HEK293 (cell line): ENCODE measurements at regions of chr10 and their contacts with region 1.

Region 1: GRCh38 chr10:102225646-102226541 is at the start of gene ELOVL3:
- H3K4me3 ChIP-seq: no peak within 1 kb of the TSS
- H3K27ac ChIP-seq: no peak within 1 kb of the TSS
- H3K4me1 ChIP-seq: peaks cover 7% of the 10 kb centered on the region
- CTCF ChIP-seq: no peak

Region 2: DNA sequence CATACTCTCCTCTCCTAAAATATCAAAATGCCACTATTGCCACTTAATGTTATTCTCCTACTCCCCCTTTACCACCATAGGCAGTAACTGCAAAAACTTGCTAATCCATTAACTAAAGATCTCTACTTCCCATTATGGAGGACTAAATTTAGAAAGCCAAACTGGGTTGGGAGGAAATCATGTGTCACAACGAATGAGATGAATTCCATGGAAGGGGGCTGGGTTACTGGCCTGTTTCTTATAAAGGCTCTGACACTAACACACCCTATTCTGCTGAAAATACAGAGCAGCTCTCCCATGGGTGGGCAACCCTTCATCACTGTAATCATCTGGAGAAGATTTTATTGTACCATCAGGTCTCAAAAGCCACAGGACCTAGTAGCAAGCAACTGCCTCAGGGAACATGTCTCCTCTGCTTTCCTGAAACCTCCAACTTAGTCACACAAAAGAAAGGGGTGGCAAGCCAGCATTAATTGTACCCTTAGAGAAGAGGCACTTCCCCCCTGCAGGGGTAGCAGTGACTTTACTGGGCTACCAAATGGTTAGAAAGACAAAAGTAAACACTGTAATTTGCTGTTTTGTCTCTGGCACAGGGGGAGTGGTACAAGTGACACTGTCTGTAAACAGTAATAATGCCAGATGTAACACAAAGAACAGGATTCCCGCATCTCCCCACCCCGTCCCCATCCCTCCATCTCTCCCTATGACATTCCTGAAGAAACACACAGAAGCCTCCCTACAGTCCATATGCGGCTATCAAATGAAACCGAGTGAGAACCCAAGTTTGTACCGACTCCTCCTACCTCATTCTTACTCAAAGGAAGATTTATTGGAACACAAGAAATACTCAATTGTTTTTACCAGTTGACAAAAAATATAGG is 251.6 kb before region 1 on chr10:
- CTCF ChIA-PET with region 1: no interaction called
- POLR2A ChIA-PET with region 1: no interaction called
- H3K4me3 ChIP-seq: no peak overlapping the region
- H3K27ac ChIP-seq: no peak overlapping the region
- H3K4me1 ChIP-seq: peaks cover 5% of the 10 kb centered on the region
- CTCF ChIP-seq: no peak

Region 3: DNA sequence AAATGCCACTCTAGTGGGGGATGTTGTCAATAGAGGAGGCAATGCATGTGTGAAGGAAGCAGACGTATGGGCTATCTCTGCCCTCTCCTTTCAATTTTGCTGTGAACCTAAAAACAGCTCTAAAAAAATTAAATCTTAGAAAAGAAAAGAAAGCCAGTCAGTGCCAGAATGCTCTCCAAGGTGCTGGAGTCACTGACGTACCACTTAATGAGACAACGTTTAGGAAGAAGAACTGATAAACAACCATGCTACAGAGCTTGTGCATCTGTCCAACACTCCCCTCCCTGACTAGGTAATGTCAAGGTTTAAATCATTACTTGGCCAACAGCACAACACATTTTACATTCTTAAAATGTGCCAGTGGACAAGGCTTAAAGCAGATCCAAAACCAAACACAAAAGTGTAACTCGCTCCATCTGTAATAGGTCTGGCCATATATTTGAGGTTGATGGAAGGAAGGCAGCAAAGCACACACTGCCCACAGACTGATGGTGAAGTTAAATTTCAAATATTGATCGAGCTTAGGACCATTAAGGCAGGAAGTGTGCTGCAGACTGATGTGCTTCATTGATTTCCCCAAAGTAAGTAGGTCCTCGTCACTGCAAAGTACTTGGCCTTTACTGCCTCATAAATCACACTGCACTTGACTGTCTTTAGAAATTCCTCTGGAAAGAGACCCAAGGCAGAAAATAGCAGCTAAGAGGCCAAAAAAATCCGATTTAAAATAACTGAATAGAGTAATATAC is 185.4 kb before region 1 on chr10:
- CTCF ChIA-PET with region 1: no interaction called
- POLR2A ChIA-PET with region 1: no interaction called
- H3K4me3 ChIP-seq: no peak overlapping the region
- H3K27ac ChIP-seq: no peak overlapping the region
- H3K4me1 ChIP-seq: peaks cover 7% of the 10 kb centered on the region
- CTCF ChIP-seq: no peak

Region 4: DNA sequence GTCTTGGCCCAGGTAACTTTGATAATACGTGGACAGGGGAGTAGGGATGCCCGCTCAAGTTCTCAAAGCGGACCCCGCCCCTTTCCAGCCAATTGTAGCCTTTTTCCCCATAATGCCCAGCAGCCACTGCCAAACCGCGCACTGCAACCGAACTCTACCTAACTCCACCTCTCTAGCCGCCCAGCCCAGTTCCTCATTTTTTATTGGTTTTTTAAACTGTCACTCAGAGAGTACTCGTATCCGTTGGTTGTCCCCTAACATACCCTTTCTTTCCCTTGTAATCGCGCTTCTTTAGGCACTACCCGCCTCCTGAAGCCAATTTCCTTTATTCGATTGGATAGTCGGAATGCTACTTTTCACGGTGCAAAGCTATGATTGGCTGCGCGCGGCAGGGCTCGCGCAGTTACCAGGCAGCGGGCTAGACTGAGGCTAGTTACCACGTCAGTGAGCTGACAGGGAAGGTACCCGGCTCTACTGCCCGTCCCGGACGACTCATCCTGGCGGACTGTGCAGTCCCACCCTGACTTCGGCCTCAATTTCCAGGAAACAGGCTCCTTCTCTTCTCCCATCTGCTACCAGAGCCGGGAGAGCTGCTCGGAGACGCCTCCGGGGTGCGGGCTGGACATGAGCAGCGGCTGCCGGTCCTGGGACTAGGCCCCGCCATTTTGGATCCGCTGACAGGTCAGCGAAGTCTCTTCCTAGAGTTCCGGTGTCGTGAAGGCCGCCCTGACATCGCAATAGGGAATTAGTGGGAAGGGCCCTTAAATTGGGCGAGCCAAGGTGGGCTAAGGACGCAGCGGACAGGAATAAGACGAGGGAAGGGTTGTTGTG is 19.4 kb after region 1 on chr10 and contains the start of gene GBF1:
- CTCF ChIA-PET with region 1: interaction called, 31 read pairs
- POLR2A ChIA-PET with region 1: interaction called, 9 read pairs
- H3K4me3 ChIP-seq: peak within 1 kb of the TSS; percentile 60
- H3K27ac ChIP-seq: peak within 1 kb of the TSS; percentile 56
- H3K4me1 ChIP-seq: peaks cover 21% of the 10 kb centered on the region
- CTCF ChIP-seq: no peak

Region 5: DNA sequence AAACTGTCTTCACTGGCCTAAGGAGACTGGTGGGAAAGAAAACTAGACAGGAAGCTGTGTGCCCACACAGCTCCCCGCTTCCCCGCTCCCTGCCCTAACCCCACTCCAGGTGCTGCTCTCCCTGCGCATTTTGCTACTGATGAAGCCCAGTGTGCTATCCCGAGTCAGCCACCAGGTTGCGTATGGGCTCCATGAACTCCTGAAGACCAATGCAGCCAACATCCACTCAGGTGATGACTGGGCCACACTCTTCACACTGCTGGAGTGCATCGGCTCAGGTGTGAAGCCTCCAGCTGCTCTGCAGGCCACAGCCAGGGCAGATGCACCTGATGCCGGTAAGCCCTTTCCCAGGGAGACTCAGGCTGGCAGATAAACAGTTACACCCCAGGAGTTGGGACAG is 149.4 kb after region 1 on chr10:
- CTCF ChIA-PET with region 1: interaction called, 13 read pairs
- POLR2A ChIA-PET with region 1: no interaction called
- H3K4me3 ChIP-seq: no peak overlapping the region
- H3K27ac ChIP-seq: no peak overlapping the region
- H3K4me1 ChIP-seq: no peaks in the 10 kb centered on the region
- CTCF ChIP-seq: 0 out of 2 replicates have a peak, but pooled peaks have one; percentile 21

Region 6: GRCh38 chr10:102399217-102400089 is 173.6 kb after region 1 on chr10:
- CTCF ChIA-PET with region 1: interaction called, 52 read pairs
- POLR2A ChIA-PET with region 1: interaction called, 3 read pairs
- H3K4me3 ChIP-seq: peak overlapping the region; percentile 57
- H3K27ac ChIP-seq: peak overlapping the region; percentile 74; the same call in 1 of the 2 replicates
- H3K4me1 ChIP-seq: peaks cover 5% of the 10 kb centered on the region; the same call in 1 of the 2 replicates
- CTCF ChIP-seq: peak; percentile 100

Region 7: GRCh38 chr10:102476466-102477141 is 250.7 kb after region 1 on chr10:
- CTCF ChIA-PET with region 1: interaction called, 20 read pairs
- POLR2A ChIA-PET with region 1: interaction called, 4 read pairs
- H3K4me3 ChIP-seq: no peak overlapping the region
- H3K27ac ChIP-seq: no peak overlapping the region
- H3K4me1 ChIP-seq: no peaks in the 10 kb centered on the region
- CTCF ChIP-seq: no peak